Activated CD4-positive, alpha-beta memory T cell treated with anti-CD3 and anti-CD28 coated beads, Interleukin-2, amount 10 ng/mL, durations not matched to agents 7 days and 5 days (primary cell): ENCODE measurements at regions of chr1 and their contacts with region 1.

Region 1: GRCh38 chr1:212035123-212035834 is at the starts of genes DTL and INTS7:
- DNase-seq: peak; percentile 99
- H3K4me3 Mint-ChIP-seq: peak within 1 kb of the TSS; percentile 98
- H3K27ac Mint-ChIP-seq: peak within 1 kb of the TSS; percentile 85
- H3K4me1 Mint-ChIP-seq: peaks cover 64% of the 10 kb centered on the region
- H3K27me3 Mint-ChIP-seq: no peaks in the 10 kb centered on the region
- total RNA-seq, gene DTL: 59.6 to 60.7 TPM
- total RNA-seq, gene INTS7: 28.4 to 28.8 TPM

Region 2: DNA sequence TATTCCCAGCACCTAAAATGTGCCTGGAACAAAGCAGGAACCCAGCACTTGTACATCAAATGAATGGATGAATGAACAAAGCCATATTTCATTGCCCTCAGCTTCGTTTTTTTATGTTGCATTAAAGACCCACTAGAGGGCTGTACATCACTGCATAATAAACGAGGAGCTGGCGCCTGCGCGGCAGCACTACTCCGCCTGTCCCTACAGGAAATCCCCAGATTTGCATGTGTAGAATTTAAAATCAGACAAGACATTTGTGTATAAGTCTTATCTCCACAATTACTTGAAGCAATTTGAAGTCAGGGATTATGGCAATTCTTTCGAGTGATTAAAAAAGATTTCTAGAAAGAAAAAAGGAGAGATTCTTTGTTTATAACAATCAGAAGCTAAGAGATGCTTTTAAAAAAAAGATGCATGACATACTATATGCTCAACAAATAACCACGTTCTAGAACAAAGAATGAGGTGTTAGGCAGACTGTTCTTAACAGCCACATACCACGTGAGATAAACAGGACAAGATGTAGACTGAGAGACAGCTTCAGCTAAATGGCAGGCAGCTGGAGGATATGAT is 354.4 kb before region 1 on chr1:
- CTCF ChIA-PET with region 1: interaction called, 49 read pairs
- POLR2A ChIA-PET with region 1: interaction called, 24 read pairs
- DNase-seq: peak; percentile 76
- H3K4me3 Mint-ChIP-seq: no peak overlapping the region
- H3K27ac Mint-ChIP-seq: peak overlapping the region; percentile 58
- H3K4me1 Mint-ChIP-seq: peaks cover 15% of the 10 kb centered on the region
- H3K27me3 Mint-ChIP-seq: peaks cover 2% of the 10 kb centered on the region

Region 3: DNA sequence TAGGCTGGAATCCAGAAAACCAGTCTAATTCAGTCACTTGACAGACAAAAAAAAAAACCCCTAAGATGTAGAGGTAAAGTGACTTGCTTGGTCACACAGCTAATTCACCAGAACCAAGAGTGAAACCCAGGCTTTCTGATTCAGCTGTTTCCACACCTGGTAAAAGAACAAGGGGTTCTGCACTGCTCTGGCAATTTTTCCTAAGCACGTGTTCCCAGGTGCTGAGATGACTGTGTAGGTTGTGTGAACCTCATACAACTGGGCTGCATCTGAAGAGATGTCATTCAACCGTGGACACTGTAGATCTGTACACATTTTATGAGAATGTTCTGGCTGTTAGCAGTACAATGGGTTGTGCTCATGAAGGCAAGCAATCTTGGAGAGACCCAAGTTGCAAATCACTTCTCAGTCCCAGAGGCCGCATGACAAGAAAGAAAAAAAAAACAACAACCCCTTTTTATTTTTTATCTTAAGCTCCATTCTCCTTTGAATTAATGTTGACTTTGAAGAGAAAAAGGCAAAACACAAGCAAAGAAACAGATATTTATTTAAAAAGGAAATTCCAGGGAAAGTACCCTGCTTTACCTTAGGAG is 95.3 kb before region 1 on chr1:
- CTCF ChIA-PET with region 1: interaction called, 12 read pairs
- POLR2A ChIA-PET with region 1: interaction called, 4 read pairs
- DNase-seq: peak; percentile 29
- H3K4me3 Mint-ChIP-seq: no peak overlapping the region
- H3K27ac Mint-ChIP-seq: no peak overlapping the region
- H3K4me1 Mint-ChIP-seq: peaks cover 37% of the 10 kb centered on the region
- H3K27me3 Mint-ChIP-seq: no peaks in the 10 kb centered on the region

Region 4: DNA sequence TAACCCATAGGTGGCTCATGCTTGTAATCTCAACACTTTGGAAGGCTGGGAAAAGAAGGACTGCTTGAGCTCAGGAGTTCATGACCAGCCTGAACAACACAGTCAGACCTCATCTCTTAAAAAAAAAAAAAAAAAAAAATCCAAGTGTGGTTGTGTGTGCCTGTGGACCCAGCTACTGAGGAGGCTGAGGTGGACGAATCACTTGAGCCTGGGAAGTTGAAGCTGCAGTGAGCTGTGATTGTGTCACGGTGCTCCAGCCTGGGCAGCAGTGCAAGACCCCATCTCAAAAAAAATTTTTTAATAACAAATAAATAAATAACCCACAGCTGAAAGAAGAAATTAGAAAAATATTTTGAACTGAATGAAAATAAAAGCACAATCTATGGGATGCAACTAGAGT is 13.7 kb before region 1 on chr1:
- CTCF ChIA-PET with region 1: interaction called, 30 read pairs
- POLR2A ChIA-PET with region 1: interaction called, 5 read pairs
- DNase-seq: no peak
- H3K4me3 Mint-ChIP-seq: no peak overlapping the region
- H3K27ac Mint-ChIP-seq: no peak overlapping the region
- H3K4me1 Mint-ChIP-seq: peaks cover 7% of the 10 kb centered on the region
- H3K27me3 Mint-ChIP-seq: no peaks in the 10 kb centered on the region

Region 5: GRCh38 chr1:212070720-212071302 is 35.5 kb after region 1 on chr1:
- CTCF ChIA-PET with region 1: interaction called, 10 read pairs
- POLR2A ChIA-PET with region 1: interaction called, 6 read pairs
- DNase-seq: no peak
- H3K4me3 Mint-ChIP-seq: no peak overlapping the region
- H3K27ac Mint-ChIP-seq: no peak overlapping the region
- H3K4me1 Mint-ChIP-seq: no peaks in the 10 kb centered on the region
- H3K27me3 Mint-ChIP-seq: no peaks in the 10 kb centered on the region

Region 6: GRCh38 chr1:212132025-212132424 is 96.7 kb after region 1 on chr1:
- CTCF ChIA-PET with region 1: no interaction called
- POLR2A ChIA-PET with region 1: no interaction called
- DNase-seq: no peak
- H3K4me3 Mint-ChIP-seq: no peak overlapping the region
- H3K27ac Mint-ChIP-seq: no peak overlapping the region
- H3K4me1 Mint-ChIP-seq: peaks cover 2% of the 10 kb centered on the region
- H3K27me3 Mint-ChIP-seq: no peaks in the 10 kb centered on the region

Region 7: GRCh38 chr1:212284744-212285684 is 249.7 kb after region 1 on chr1 and contains the start of gene PPP2R5A:
- CTCF ChIA-PET with region 1: interaction called, 25 read pairs
- POLR2A ChIA-PET with region 1: interaction called, 43 read pairs
- DNase-seq: peak; percentile 99
- H3K4me3 Mint-ChIP-seq: peak within 1 kb of the TSS; percentile 94
- H3K27ac Mint-ChIP-seq: peak within 1 kb of the TSS; percentile 98
- H3K4me1 Mint-ChIP-seq: peaks cover 40% of the 10 kb centered on the region
- H3K27me3 Mint-ChIP-seq: peaks cover 6% of the 10 kb centered on the region
- total RNA-seq, gene PPP2R5A: 65.9 to 67.0 TPM

Region 8: DNA sequence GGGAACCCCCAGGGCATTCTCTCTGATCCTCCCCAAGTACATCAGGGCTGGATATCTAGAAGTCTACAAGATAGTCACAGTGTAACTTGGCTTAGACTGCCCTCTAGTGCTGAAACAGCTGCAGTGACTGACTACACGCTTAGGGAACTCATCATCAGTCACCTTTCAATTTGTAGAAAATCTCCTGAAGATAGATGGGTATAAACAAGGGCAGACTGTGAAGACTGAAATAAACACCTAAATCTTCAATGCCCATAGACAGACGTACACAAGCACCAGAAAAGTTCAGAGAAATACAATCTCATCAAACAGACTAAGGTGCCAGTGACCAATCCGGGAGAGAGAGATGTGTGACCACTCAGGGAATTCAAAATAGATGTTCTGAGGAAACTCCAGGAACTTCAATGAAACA is 332.8 kb after region 1 on chr1:
- CTCF ChIA-PET with region 1: interaction called, 15 read pairs
- POLR2A ChIA-PET with region 1: interaction called, 4 read pairs
- DNase-seq: peak; percentile 65
- H3K4me3 Mint-ChIP-seq: no peak overlapping the region
- H3K27ac Mint-ChIP-seq: no peak overlapping the region
- H3K4me1 Mint-ChIP-seq: peaks cover 2% of the 10 kb centered on the region
- H3K27me3 Mint-ChIP-seq: no peaks in the 10 kb centered on the region